Gastrocnemius medialis (tissue), 4 donors: ENCODE measurements at regions of chr16 and their contacts with region 1.

Region 1: DNA sequence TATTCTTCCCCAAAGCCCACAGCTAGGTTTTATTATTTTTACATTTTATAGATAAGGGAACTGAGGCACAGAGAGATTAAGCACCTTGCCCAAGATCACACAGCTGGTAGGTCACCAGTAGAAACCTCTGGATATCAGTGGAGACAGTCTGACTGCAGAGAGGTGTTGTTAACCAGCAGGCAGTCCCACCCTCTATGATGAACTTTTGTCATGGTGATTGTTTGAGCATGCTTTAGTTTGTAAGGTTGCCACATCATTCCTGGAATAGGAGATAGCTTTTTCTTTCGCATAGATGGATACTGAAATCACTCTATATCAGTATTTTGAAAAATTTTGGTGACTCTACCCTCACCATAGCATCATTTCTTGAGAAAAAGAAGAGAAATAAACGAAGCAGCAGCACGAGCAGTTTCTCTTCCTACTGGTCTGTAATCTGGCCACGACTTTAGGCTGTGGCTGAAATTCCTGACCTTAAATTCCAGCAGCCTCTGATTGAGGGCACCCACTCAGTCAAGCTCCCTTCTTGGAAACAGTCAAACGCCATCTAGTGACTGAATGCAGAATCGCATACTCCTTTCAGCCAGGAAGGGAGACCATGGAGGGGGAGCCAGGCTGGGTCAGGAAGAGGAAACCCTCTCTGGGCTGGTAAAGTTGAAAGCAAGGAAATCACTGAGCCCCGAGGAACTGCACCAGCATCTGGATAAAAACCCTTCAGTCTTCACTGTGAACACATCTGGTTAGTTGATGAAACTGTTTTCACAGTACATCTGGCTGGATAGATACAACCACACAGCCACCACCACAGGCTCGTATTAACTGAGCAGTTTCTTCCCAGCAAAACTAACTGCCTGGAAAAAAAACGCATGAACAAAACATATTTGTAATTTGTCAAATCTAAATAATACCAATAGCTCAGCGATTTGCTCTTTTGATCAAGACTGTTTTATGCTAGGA is 108.4 kb upstream of the XYLT1 start:
- DNase-seq: peak; percentile 24 to 25
- ATAC-seq: peak; percentile 55 to 76
- H3K4me3 ChIP-seq: no peak overlapping the region
- H3K27ac ChIP-seq: no peak overlapping the region
- H3K4me1 ChIP-seq: no peaks in the 10 kb centered on the region
- H3K27me3 ChIP-seq: no peaks in the 10 kb centered on the region
- CTCF ChIP-seq: peak; percentile 42 to 76 (median 68)
- POLR2A ChIP-seq: no peak

Region 2: DNA sequence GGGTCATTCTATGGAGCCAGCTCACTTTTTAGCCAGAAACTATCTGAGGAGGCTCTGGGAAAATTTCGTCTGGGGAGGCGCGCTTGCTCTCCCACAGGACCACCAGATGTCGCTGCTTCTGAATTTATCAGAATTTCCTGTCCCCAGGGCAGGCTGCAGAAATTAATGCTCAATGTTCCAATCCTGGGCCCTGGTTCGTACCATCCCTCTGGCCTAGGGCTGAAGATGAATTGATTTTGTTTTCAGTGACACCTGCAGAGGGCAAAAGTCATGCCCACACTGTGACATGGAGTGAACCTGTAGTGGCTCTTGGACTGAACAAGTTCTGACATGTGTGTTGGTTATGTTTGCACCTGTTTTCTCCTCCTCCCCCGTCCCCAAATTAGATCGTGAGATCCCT is 717.7 kb before region 1 on chr16:
- in situ Hi-C with region 1: loop called in 1 of 4 experiments (anchors 25 kb)
- intact Hi-C with region 1: loop called (anchors 5 kb)
- DNase-seq: peak in 1 of 2 donors; percentile 3
- ATAC-seq: no peak
- H3K4me3 ChIP-seq: no peak overlapping the region
- H3K27ac ChIP-seq: no peak overlapping the region
- H3K4me1 ChIP-seq: no peaks in the 10 kb centered on the region
- H3K27me3 ChIP-seq: no peaks in the 10 kb centered on the region
- CTCF ChIP-seq: peak; percentile 23 to 50 (median 34)
- POLR2A ChIP-seq: no peak

Region 3: DNA sequence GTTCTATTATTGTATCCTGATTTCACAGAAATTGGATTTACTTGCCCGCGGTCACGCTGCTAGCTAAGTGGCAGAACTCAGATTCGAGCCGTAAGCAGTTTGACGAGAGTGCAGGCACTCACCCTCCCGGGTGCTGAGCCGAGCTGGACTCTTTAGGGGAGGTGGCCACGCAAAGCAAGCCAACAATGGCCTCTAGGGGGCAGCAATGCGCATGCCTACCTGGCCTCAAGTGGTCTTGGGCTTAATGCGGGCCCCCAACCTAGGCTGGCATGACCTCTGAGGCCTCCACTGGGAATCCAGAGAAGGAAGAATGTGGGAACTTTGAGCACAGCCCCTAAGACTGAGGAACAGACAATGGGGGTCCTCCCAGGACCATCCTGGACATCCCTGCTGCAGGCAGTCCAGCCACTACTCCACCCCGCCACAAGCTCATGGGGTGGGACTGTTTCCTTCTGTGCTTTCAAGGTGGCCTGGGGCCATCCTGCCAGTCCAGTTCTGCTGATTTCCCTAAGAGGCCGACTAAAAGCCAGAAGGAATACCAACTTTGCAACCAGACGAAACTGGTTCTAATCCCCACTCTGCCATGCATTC is 384.9 kb before region 1 on chr16:
- in situ Hi-C with region 1: loop called in 1 of 4 experiments (anchors 25 kb)
- intact Hi-C with region 1: loop called (anchors 10 kb)
- DNase-seq: peak; percentile 5 to 28
- ATAC-seq: no peak
- H3K4me3 ChIP-seq: no peak overlapping the region
- H3K27ac ChIP-seq: no peak overlapping the region
- H3K4me1 ChIP-seq: no peaks in the 10 kb centered on the region
- H3K27me3 ChIP-seq: no peaks in the 10 kb centered on the region
- CTCF ChIP-seq: peak in 4 of 5 experiments; percentile 28 to 62 (median 55)
- POLR2A ChIP-seq: no peak

Region 4: GRCh38 chr16:17271687-17272086 is 307.5 kb before region 1 on chr16:
- in situ Hi-C with region 1: no loop called
- intact Hi-C with region 1: loop called (anchors 5 kb)
- DNase-seq: no peak
- ATAC-seq: no peak
- H3K4me3 ChIP-seq: no peak overlapping the region
- H3K27ac ChIP-seq: peak overlapping the region in 1 of 4 donors; percentile 26
- H3K4me1 ChIP-seq: peaks cover 17 to 32% of the 10 kb centered on the region in 2 donors
- H3K27me3 ChIP-seq: no peaks in the 10 kb centered on the region
- CTCF ChIP-seq: no peak
- POLR2A ChIP-seq: no peak